Esophagus squamous epithelium (tissue), 5 donors: ENCODE measurements at regions of chr4 and their contacts with region 1.

Region 1: DNA sequence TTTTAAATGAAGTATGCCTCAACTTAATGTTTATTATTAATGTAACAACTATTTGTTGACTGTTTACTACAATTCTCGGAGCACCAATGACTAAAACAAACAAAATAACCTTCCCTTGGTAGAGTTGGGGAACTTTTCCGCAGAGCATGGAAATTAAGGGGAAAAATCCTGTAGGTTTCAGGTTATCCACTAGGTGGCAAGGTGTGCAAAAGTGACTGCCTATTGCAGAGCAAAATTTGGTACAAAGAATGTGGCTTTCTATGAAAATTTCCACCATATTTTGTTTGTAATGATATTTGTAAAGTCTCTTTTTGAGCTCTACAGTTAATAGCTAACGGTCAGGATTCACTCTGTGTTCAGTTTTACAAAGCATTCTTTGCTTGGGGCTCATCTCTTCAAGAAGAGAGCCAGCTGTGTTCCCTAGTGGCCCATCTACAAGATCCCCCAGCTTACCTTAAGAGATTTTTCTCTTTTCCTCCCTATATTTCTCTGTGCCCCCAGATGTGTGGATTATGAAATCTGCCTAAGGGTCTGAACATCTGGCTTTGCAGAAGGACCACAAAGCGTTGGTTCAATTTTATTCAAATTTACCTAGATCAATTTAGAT is 61.1 kb downstream of the FBXO8 start:
- DNase-seq: no peak
- H3K4me3 ChIP-seq: no peak overlapping the region
- H3K27ac ChIP-seq: no peak overlapping the region
- H3K4me1 ChIP-seq: peaks cover 6 to 12% (median 11%) of the 10 kb centered on the region in 3 donors
- H3K27me3 ChIP-seq: peaks cover 5 to 59% (median 11%) of the 10 kb centered on the region in 4 donors
- CTCF ChIP-seq: peak in 5 of 6 experiments; percentile 24 to 67 (median 52)
- POLR2A ChIP-seq: no peak

Region 2: DNA sequence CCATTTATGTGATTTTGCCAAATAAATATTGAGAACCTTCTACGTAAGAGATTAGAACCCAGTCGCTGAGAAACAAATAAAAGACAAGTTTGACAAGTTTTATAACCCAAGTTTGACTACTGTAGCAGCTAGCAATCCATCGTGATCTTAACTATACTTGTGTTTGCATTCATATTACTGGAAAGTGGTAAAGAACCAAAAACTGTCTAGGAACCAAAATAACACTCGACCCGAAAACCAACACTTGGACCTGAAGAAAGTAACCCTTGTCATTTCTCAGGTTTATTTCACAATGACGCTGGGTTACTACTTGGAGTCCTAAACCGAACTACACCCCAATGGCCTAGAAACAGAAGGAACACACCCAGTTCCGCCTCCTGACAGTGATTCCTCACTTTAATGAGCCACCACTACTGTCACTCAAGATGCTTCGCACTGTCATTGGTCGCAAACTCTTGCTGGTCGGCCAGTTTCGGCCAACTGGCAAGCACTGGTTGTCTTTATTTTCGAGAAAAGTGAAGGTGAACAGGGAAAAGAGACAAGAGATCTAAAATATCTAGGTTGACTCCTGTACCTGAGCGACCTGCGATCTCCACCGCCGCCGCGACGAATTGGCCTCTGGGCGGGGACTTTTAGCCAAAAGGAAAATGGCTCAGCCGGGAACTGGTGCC is 60.6 kb after region 1 on chr4:
- intact Hi-C with region 1: no loop called
- DNase-seq: peak; percentile 17
- H3K4me3 ChIP-seq: peak overlapping the region; percentile 59 to 88 (median 79)
- H3K27ac ChIP-seq: peak overlapping the region; percentile 93 to 100 (median 97)
- H3K4me1 ChIP-seq: peaks cover 3 to 47% (median 15%) of the 10 kb centered on the region in 3 donors
- H3K27me3 ChIP-seq: no peaks in the 10 kb centered on the region
- CTCF ChIP-seq: peak in 1 of 6 experiments; percentile 2
- POLR2A ChIP-seq: no peak

Region 3: GRCh38 chr4:174324725-174325124 is 102.4 kb after region 1 on chr4:
- intact Hi-C with region 1: loop called (anchors 10 kb)
- DNase-seq: no peak
- H3K4me3 ChIP-seq: no peak overlapping the region
- H3K27ac ChIP-seq: no peak overlapping the region
- H3K4me1 ChIP-seq: no peaks in the 10 kb centered on the region
- H3K27me3 ChIP-seq: no peaks in the 10 kb centered on the region
- CTCF ChIP-seq: no peak
- POLR2A ChIP-seq: no peak